Vagina (tissue), 2 donors: ENCODE measurements at regions of chr1 and their contacts with region 1.

Region 1: GRCh38 chr1:99292886-99293285 is 28.6 kb downstream of the PLPPR4 start:
- DNase-seq: no peak
- H3K4me3 ChIP-seq: no peak overlapping the region
- H3K27ac ChIP-seq: no peak overlapping the region
- H3K4me1 ChIP-seq: no peaks in the 10 kb centered on the region
- H3K27me3 ChIP-seq: no peaks in the 10 kb centered on the region
- CTCF ChIP-seq: no peak
- POLR2A ChIP-seq: no peak

Region 2: GRCh38 chr1:99269321-99269720 is 23.6 kb before region 1 on chr1:
- intact Hi-C with region 1: loop called (anchors 1 kb)
- DNase-seq: no peak
- H3K4me3 ChIP-seq: no peak overlapping the region
- H3K27ac ChIP-seq: no peak overlapping the region
- H3K4me1 ChIP-seq: peaks cover 3% of the 10 kb centered on the region
- H3K27me3 ChIP-seq: no peaks in the 10 kb centered on the region
- CTCF ChIP-seq: no peak
- POLR2A ChIP-seq: no peak

Region 3: GRCh38 chr1:99326215-99326949 is 33.5 kb after region 1 on chr1:
- intact Hi-C with region 1: no loop called
- DNase-seq: no peak
- H3K4me3 ChIP-seq: no peak overlapping the region
- H3K27ac ChIP-seq: no peak overlapping the region
- H3K4me1 ChIP-seq: no peaks in the 10 kb centered on the region
- H3K27me3 ChIP-seq: no peaks in the 10 kb centered on the region
- CTCF ChIP-seq: no peak
- POLR2A ChIP-seq: no peak